GM12878 (cell line): ENCODE measurements at regions of chr5 and their contacts with region 1.

Region 1: GRCh38 chr5:77491783-77492652 is at the start of gene WDR41:
- DNase-seq: peak; percentile 85
- ATAC-seq: peak; percentile 92
- H3K4me3 ChIP-seq: peak within 1 kb of the TSS; percentile 82
- H3K27ac ChIP-seq: peak within 1 kb of the TSS; percentile 96
- H3K4me1 ChIP-seq: peaks cover 4% of the 10 kb centered on the region
- H3K27me3 ChIP-seq: no peaks in the 10 kb centered on the region
- CTCF ChIP-seq: peak; percentile 88 to 93 (median 93)
- EP300 ChIP-seq: peak in 1 of 2 experiments; percentile 59; a peak in 2 of 4 replicates
- POLR2A ChIP-seq: peak; percentile 94
- RAD21 ChIP-seq: peak; percentile 53
- polyA plus RNA-seq, gene WDR41: 60.0 to 86.4 TPM

Region 2: DNA sequence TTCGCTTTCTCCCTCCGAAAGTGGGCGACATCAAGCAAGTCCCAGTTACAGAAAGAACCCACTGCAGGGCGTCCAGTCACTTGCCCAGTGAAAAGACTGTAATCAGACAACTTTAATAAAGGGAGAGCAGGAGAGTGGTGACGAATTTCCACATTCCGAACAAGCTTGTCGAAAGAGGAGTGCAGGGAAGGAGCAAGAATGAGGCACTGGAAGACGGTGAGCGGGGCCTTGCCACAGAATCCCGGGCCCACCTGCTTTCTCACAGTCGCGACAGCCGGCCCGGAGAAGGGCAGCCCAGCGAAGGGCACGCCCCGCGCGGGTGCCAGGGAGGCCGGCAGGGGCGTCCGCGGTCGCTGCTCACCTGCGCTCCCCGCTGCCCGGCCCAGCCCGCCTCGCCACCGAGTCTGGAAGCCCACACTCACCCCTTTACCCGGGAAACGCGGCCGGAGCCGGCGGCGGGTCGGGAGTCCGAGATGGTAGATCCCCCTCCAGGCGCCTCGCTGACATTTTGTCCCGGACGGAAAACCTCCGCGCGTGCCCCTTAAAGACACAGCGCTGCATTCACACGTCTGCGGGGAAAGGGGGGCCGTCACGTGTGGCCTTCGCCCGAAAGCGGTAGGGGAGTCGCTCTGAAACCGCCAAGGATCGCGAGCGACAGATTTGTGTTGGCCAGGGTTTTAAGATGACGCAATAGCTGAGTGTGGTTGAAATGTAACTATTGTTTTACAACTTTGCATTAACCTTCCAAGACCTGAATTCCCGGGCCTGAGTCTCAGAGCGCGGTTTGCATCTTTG is 405.1 kb before region 1 on chr5 and contains the start of gene ZBED3:
- CTCF ChIA-PET with region 1: interaction called, 3 read pairs
- POLR2A ChIA-PET with region 1: no interaction called
- RAD21 ChIA-PET with region 1: interaction called, 3 read pairs
- SMC1A ChIA-PET with region 1: interaction called, 3 read pairs
- in situ Hi-C with region 1: no loop called
- intact Hi-C with region 1: loop called (anchors 5 kb)
- DNase-seq: peak; percentile 30
- ATAC-seq: peak; percentile 88
- H3K4me3 ChIP-seq: peak within 1 kb of the TSS; percentile 75
- H3K27ac ChIP-seq: peak within 1 kb of the TSS; percentile 62
- H3K4me1 ChIP-seq: 0 out of 2 replicates have a peak, but pooled peaks cover 3% of the 10 kb centered on the region
- H3K27me3 ChIP-seq: no peaks in the 10 kb centered on the region
- CTCF ChIP-seq: peak in 2 of 3 experiments; percentile 16 to 41; a peak in 2 of 6 replicates
- EP300 ChIP-seq: no peak
- POLR2A ChIP-seq: peak; percentile 15; the same call in 1 of the 2 replicates
- RAD21 ChIP-seq: no peak; the same call in 1 of the 2 replicates
- polyA plus RNA-seq, gene ZBED3: 1.8 to 2.1 TPM

Region 3: DNA sequence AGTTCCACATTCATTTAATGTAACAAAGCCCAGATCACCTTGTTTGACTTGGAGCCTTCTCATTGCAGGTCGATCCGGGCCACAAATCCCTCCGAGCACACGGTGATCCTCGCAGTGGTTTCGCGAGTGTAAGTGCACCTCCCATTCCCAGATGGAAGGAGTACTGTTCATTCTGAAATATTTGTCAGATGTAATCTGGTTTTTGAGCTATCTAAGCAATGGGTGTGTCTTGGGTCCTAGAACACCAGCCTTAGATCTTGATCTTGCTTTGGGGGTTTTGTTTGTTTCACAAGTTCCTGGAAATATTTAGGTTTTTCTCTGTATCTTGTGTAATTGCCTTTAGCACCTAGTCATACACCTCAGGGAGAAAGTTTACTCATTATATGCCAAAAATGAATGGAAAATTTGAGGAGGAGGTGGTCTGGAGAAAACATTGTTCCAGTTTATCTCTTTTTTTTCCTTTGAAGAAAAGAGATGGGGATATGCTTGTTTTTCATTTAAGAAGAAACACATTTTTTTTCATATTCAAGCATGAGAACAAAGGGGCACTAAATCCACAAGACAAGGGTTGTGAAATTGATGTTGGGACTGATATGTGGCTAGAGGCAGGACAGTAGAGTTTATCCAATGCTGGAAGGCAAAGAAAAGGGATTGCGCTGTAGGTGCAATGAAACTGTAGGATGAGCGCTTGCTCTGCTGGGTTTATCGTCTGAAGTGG is 162.9 kb before region 1 on chr5:
- CTCF ChIA-PET with region 1: no interaction called
- POLR2A ChIA-PET with region 1: no interaction called
- RAD21 ChIA-PET with region 1: no interaction called
- SMC1A ChIA-PET with region 1: no interaction called
- in situ Hi-C with region 1: no loop called
- intact Hi-C with region 1: no loop called
- DNase-seq: no peak
- ATAC-seq: no peak
- H3K4me3 ChIP-seq: no peak overlapping the region
- H3K27ac ChIP-seq: no peak overlapping the region
- H3K4me1 ChIP-seq: no peaks in the 10 kb centered on the region
- H3K27me3 ChIP-seq: peaks cover 0 to 1% of the 10 kb centered on the region in 2 experiments; a peak in 2 of 4 replicates
- CTCF ChIP-seq: no peak
- EP300 ChIP-seq: no peak
- POLR2A ChIP-seq: no peak
- RAD21 ChIP-seq: no peak

Region 4: DNA sequence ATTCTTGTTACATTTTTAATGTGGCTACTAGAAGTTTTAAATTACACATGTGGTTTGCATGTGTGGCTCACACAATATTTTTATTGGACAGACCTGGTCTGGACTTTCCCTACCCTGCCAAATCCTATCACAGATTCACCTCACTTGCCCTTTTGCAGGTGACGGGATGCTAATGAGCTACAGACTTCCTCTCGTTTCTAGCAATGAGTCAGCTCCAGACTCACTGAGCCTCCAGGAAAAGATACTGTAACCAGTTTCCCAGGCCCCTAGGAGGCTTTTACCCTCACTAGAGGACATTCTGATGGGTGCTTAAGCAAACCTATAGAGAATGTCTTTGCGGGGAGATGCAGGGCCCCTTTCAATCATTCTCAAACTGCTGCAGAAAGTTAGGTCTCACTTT is 135.3 kb before region 1 on chr5:
- CTCF ChIA-PET with region 1: no interaction called
- POLR2A ChIA-PET with region 1: no interaction called
- RAD21 ChIA-PET with region 1: interaction called, 12 read pairs
- SMC1A ChIA-PET with region 1: interaction called, 5 read pairs
- in situ Hi-C with region 1: no loop called
- intact Hi-C with region 1: no loop called
- DNase-seq: peak; percentile 84
- ATAC-seq: peak; percentile 94
- H3K4me3 ChIP-seq: no peak overlapping the region
- H3K27ac ChIP-seq: no peak overlapping the region
- H3K4me1 ChIP-seq: peaks cover 16% of the 10 kb centered on the region
- H3K27me3 ChIP-seq: no peaks in the 10 kb centered on the region
- CTCF ChIP-seq: no peak
- EP300 ChIP-seq: no peak
- POLR2A ChIP-seq: no peak
- RAD21 ChIP-seq: peak; percentile 38; the same call in 1 of the 2 replicates

Region 5: GRCh38 chr5:77396017-77396416 is 96.0 kb before region 1 on chr5:
- CTCF ChIA-PET with region 1: interaction called, 9 read pairs
- POLR2A ChIA-PET with region 1: no interaction called
- RAD21 ChIA-PET with region 1: interaction called, 13 read pairs
- SMC1A ChIA-PET with region 1: interaction called, 14 read pairs
- in situ Hi-C with region 1: no loop called
- intact Hi-C with region 1: no loop called
- DNase-seq: peak; percentile 60
- ATAC-seq: peak; percentile 95
- H3K4me3 ChIP-seq: no peak overlapping the region
- H3K27ac ChIP-seq: no peak overlapping the region
- H3K4me1 ChIP-seq: no peaks in the 10 kb centered on the region
- H3K27me3 ChIP-seq: no peaks in the 10 kb centered on the region
- CTCF ChIP-seq: no peak
- EP300 ChIP-seq: peak in 1 of 2 experiments; percentile 31; a peak in 1 of 4 replicates
- POLR2A ChIP-seq: no peak
- RAD21 ChIP-seq: no peak

Region 6: GRCh38 chr5:77993855-77994318 is 501.9 kb after region 1 on chr5:
- CTCF ChIA-PET with region 1: no interaction called
- POLR2A ChIA-PET with region 1: no interaction called
- RAD21 ChIA-PET with region 1: no interaction called
- SMC1A ChIA-PET with region 1: no interaction called
- in situ Hi-C with region 1: no loop called
- intact Hi-C with region 1: no loop called
- DNase-seq: no peak
- ATAC-seq: no peak
- H3K4me3 ChIP-seq: no peak overlapping the region
- H3K27ac ChIP-seq: no peak overlapping the region
- H3K4me1 ChIP-seq: no peaks in the 10 kb centered on the region
- H3K27me3 ChIP-seq: no peaks in the 10 kb centered on the region
- CTCF ChIP-seq: no peak
- EP300 ChIP-seq: no peak
- POLR2A ChIP-seq: no peak
- RAD21 ChIP-seq: no peak